ENCODE measurements at regions of chr10 and their contacts with region 1.

Region 1: DNA sequence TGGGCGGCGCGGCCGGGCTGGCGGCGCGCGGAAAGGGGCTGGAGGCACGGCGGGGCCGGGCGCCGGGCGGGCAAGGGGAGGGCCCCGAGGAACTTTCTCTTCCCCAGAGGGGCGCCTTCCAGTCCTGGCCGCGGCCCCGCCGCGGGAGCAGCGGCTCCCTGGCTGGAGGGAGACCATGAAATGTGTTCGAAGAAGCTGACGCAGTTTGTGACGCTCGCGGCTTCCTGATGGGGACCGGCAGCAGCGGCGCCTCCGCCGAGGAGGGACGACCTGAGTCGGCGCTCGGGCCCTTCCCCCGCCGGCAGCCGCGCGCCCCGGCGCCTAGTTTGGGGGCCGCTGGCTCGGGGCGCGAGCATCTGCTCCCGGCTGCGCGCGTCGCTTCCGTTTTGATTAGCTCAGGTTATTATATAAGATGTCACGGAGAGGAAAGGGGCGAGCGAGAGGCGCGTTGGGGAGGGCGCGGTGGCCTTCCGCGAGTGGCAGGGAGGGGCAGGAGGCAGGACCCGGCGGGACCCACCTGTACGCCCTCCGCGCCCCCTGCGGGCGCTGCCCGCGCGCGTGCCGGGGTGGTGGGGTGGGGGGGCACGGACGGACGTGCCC is 57.1 kb upstream of the PCGF5 start:
- DNase-seq: peak; percentile 81
- ATAC-seq: peak; percentile 64 to 73

Region 2: DNA sequence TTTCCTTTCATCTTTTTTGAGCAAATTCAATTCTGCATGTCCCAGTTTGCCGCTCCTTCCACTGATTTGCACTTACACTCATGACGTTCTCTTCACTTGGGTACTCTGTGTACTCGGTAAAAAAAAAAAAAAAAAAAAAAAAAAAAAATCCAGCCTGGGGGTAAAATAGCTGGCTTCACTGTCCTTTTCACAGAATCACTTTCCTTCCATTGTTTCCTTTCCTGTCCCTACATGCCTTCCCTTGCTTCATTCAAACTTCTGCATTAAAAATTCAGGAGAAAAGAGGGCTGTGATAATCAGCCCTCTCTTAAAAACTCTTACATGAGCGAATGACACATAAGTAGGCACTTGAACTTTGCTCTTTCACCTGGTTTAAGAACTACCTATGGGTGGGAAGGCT is 251.2 kb before region 1 on chr10:
- intact Hi-C with region 1: loop called in 1 of 2 experiments (anchors 10 kb)
- DNase-seq: no peak
- ATAC-seq: peak in 1 of 2 donors; percentile 2

Region 3: DNA sequence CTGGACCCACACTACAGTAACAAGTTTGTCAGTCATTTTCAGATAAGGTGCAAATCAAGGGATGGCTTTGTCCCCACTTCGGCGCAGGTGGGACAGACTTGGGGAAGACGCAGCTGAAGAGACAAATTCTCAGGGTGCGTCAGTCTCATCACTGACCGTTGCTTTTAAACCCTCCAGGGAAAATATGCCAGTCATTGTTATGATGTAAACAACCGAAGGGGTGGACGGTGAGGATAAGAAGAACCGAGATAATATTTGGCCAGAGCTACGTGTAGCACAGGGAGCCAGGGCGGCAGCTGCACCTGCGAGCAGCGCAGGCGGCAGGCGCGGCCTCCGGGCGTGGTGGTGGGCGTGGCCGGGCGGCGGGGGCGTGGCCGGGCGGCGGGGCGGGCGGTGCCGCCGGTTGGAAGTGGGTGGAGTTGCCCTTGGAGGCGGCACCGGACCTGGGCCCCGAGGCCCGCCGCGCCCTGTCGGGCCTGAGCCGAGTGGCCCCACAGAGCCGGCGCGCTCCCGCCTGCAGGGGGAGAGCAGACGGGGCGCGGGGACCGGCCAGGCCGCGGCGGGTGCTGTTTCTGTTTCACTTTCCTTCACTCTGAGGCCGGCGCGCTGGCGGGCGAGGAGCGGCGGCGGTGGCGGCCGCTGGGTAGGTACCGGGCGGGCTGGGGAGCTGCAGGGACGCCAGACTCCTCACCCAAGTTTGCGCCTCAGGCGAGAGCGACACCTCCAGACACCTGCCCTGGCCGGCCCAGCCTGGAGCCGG is 57.0 kb after region 1 on chr10 and contains the start of gene PCGF5:
- intact Hi-C with region 1: loop called in 1 of 2 experiments (anchors 10 kb)
- DNase-seq: peak; percentile 93
- ATAC-seq: peak; percentile 99 to 100
- total RNA-seq, gene PCGF5: 46.3 to 55.6 TPM

Measured in left cardiac atrium (tissue), 4 donors.